ENCODE measurements at regions of chr7 and their contacts with region 1.

Region 1: DNA sequence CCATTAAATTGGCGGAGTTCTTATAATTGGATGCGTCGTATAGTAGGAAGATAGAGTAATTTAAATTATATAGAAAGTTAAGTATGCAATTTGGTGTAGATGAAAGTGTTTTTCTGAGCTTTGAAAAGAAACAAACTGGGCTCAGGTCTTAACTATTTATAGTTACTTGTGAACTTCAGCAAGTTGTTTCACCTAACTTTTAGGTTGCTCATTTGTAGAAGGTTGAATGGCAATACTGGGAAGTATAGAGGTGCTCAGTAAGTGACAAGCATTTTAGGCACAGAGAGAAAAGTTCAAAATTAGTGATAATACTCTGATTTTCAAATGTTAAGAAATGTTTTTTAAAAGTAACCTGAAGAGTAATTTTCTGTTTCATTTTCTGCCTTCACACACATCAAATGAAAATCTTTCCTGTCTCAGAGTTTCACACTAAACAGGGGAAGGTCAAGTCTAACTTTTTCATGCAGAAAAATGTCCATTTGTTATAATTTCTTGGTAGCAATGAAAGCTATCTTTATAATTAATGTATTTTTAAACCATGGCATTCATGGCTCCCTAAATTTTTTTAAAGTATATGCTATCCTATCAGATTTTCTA is 146.5 kb downstream of the PHF14 start:
- DNase-seq: no peak
- H3K4me3 Mint-ChIP-seq: peak overlapping the region; percentile 40
- H3K27ac Mint-ChIP-seq: peak overlapping the region; percentile 71
- H3K4me1 Mint-ChIP-seq: peaks cover 27% of the 10 kb centered on the region
- H3K27me3 Mint-ChIP-seq: no peaks in the 10 kb centered on the region

Region 2: GRCh38 chr7:10939911-10940703 is 180.1 kb before region 1 on chr7:
- intact Hi-C with region 1: loop called (anchors 1 kb)
- DNase-seq: peak; percentile 83
- H3K4me3 Mint-ChIP-seq: no peak overlapping the region
- H3K27ac Mint-ChIP-seq: no peak overlapping the region
- H3K4me1 Mint-ChIP-seq: peaks cover 33% of the 10 kb centered on the region
- H3K27me3 Mint-ChIP-seq: no peaks in the 10 kb centered on the region

Region 3: GRCh38 chr7:10973061-10973944 is 146.9 kb before region 1 on chr7 and contains the start of gene PHF14:
- intact Hi-C with region 1: loop called (anchors 2 kb)
- DNase-seq: peak; percentile 94
- H3K4me3 Mint-ChIP-seq: peak within 1 kb of the TSS; percentile 97
- H3K27ac Mint-ChIP-seq: peak within 1 kb of the TSS; percentile 90
- H3K4me1 Mint-ChIP-seq: peaks cover 39% of the 10 kb centered on the region
- H3K27me3 Mint-ChIP-seq: peaks cover 10% of the 10 kb centered on the region
- total RNA-seq, gene PHF14: 42.9 and 43.8 TPM in 2 replicates

Region 4: DNA sequence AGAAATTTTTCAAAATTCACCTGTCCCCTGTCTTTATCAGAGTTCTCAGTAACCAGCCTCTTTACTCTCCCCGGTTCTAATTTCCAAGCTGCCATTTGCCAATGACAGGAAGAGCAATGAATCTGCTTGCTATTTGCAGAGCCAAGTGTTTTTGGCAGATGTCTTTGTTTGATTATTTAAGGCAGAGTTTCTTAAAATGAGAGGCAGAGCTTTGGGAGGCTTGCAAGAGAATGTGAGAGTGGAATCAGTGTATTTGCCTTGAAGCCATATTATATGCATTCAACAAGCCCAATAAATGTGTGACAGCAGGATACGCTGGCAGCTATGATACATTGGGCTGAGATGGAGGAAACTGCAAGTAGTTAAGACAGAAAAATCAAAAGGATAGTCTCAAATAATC is 50.0 kb after region 1 on chr7:
- intact Hi-C with region 1: loop called (anchors 2 kb)
- DNase-seq: no peak
- H3K4me3 Mint-ChIP-seq: no peak overlapping the region
- H3K27ac Mint-ChIP-seq: no peak overlapping the region
- H3K4me1 Mint-ChIP-seq: peaks cover 6% of the 10 kb centered on the region
- H3K27me3 Mint-ChIP-seq: no peaks in the 10 kb centered on the region

Region 5: DNA sequence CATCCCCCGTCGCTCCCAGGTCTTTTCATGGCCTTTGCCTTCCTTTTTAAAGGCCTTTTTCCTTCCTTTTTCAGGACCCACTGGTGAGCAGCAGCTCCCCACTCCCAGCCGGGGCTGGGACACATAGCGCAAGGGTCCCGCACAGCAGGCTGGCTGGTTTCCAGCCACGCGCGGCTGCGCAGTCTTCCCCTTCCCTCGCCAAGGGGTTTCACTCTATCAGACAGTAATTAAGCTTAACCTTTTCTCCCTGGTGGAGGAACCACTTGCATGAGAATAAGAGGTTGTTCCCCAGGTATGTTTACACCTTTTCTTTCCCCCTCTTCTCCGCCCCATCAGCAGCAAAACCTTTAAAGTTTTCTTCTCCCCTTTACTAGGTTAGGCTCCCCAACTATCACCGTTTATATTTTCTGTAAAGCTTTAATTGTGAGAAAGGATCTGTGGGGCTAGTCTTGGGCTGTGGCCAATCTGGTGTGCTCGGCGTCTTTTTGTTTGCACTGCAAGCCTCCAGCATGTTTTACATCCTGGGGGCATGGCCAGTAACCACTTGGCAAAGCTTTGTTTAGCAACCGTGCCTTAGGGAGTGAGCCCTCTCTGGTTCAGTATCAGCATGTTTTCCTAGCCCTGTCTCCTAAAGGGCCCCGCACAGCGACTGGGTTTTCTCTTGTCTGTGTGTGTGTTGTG is 73.1 kb after region 1 on chr7:
- intact Hi-C with region 1: loop called (anchors 1 kb)
- DNase-seq: no peak
- H3K4me3 Mint-ChIP-seq: peak overlapping the region; percentile 66
- H3K27ac Mint-ChIP-seq: peak overlapping the region; percentile 75
- H3K4me1 Mint-ChIP-seq: peaks cover 19% of the 10 kb centered on the region
- H3K27me3 Mint-ChIP-seq: peaks cover 5% of the 10 kb centered on the region

Region 6: DNA sequence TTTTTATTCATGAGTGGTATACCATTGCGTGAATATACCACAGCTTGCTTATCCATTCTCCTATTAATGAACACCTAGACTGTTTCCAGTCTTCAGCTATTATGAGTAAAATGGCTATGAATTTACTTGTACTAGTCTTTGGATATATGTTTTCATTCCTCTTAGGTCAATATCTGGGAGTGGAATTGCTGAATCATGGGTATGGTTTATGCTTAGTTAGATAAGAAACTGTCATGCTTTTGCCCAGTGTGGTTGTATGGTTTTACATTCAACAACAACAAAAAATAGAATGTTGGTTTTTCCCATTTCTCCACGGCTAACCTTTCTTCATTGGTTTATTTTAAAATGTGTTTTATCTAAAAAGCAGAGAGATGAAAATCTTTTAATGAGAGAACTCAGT is 161.8 kb after region 1 on chr7:
- intact Hi-C with region 1: no loop called
- DNase-seq: no peak
- H3K4me3 Mint-ChIP-seq: no peak overlapping the region
- H3K27ac Mint-ChIP-seq: no peak overlapping the region
- H3K4me1 Mint-ChIP-seq: no peaks in the 10 kb centered on the region
- H3K27me3 Mint-ChIP-seq: no peaks in the 10 kb centered on the region